Motor neuron (in vitro differentiated cells): ENCODE measurements at regions of chr4 and their contacts with region 1.

Region 1: DNA sequence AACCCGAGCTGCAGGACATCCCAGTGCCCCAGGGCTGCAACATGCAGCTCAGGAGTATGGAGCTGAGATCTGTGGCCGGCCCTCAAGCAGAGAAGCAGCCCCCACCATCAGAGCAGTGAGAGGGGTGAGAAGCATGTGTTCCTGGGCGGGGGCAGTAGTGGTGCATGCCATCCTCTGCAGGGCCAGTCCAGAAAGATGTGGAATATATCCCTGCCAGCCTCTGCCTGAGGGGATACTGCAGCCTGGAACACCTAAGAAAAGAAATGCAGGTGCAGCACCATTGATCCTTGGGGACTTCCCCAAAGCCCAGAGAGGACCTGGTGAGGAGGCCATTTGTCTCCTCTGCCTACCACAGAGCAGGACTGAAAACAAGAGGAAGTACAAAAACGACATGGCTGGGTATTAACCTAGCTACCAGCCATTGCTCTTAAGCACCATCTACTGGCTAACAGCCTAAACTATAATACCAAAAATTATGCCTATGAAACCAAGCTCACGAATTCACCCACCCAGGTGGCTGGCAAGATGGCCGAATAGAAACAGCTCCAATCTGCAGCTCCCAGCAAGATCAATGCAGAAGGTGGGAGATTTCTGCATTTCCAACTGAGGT is 158.8 kb downstream of the ADGRA3 start:
- ATAC-seq: peak in 5 of 8 experiments; percentile 29 to 82 (median 32)
- H3K4me3 ChIP-seq: no peak overlapping the region
- H3K27ac ChIP-seq: no peak overlapping the region
- H3K4me1 ChIP-seq: peaks cover 0 to 2% of the 10 kb centered on the region in 2 donors

Region 2: DNA sequence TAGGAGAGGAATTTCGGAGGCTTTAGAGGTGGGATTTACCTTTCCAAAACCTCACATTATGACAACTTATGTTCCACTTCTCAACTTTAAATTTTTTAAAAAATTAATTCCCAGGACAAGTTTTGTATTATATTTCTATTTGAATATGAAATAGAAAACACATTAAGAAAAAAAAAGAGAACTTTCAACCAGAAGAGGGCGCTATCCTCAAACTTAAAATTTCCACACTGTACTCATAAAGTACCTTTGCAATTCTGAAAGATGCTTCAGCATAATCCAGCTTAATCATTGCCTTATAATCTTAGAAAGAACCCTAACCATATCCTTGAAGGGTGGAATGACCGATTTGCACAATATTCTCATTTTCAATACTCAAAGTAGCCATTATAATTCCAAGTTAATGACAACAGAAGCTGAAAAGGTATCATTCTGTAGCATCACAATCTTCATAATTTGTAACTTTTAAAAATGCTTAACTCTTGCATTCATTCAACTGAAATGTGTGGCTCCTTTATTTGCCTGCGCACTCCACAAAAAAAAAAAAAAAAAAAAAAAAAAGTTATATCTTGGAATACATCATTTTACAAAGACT is 566.6 kb before region 1 on chr4:
- in situ Hi-C with region 1: loop called in 1 of 9 experiments (anchors 25 kb)
- ATAC-seq: peak in 5 of 8 experiments; percentile 31 to 58 (median 35)
- H3K4me3 ChIP-seq: no peak overlapping the region
- H3K27ac ChIP-seq: no peak overlapping the region
- H3K4me1 ChIP-seq: no peaks in the 10 kb centered on the region

Region 3: DNA sequence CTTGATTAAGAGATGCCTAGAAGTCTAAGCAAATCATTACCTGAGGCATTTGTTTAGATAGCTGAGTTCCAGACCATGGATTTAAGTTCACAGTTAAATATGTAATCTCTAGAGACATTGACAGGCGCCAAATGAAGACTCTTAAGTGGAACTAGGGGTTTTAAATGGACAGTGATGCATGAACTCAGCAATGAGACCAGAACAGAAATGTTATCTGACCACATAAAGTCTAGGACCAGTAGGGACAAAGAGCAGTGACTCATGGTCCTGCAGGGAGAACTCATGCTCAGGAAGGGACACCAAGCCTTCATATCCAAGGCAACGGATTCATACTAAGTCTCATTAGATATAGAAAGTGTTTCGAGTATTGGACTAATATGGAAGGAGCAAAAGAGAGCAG is 1380.5 kb after region 1 on chr4:
- in situ Hi-C with region 1: no loop called
- ATAC-seq: no peak
- H3K4me3 ChIP-seq: no peak overlapping the region
- H3K27ac ChIP-seq: no peak overlapping the region
- H3K4me1 ChIP-seq: no peaks in the 10 kb centered on the region